GM12878 (cell line): ENCODE measurements at regions of chr4 and their contacts with region 1.

Region 1: GRCh38 chr4:2867758-2868491 is 24.3 kb downstream of the ADD1 start:
- DNase-seq: no peak
- ATAC-seq: no peak
- H3K4me3 ChIP-seq: no peak overlapping the region
- H3K27ac ChIP-seq: no peak overlapping the region
- H3K4me1 ChIP-seq: peaks cover under 1% of the 10 kb centered on the region; the same call in 1 of the 2 replicates
- H3K27me3 ChIP-seq: no peaks in the 10 kb centered on the region
- CTCF ChIP-seq: no peak
- EP300 ChIP-seq: no peak
- POLR2A ChIP-seq: no peak
- RAD21 ChIP-seq: no peak

Region 2: DNA sequence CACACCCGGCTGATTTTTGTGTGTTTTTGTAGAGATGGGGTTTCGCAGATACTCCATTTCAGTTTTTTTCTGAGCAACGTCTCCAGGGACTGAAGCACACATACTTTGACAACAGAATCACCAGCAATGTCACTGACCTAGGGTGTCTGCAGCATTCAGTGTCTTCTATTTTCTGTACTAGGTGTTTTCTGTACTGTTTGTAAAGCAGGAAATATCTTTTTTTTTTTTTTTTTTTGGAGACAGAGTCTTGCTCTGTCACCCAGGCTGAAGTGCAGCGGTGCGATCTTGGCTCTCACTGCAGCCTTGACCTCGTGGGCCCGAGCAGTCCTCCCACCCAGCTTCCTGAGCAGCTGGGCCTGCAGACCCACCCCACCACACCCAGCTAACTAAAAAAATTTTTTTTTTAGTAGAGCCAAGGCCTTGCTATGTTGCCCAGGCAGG is 15.4 kb before region 1 on chr4:
- CTCF ChIA-PET with region 1: interaction called, 23 read pairs
- POLR2A ChIA-PET with region 1: interaction called, 7 read pairs
- RAD21 ChIA-PET with region 1: interaction called, 22 read pairs
- SMC1A ChIA-PET with region 1: interaction called, 49 read pairs
- in situ Hi-C with region 1: no loop called
- intact Hi-C with region 1: no loop called
- DNase-seq: peak; percentile 59
- ATAC-seq: peak; percentile 67
- H3K4me3 ChIP-seq: peak overlapping the region; percentile 65
- H3K27ac ChIP-seq: peak overlapping the region; percentile 60
- H3K4me1 ChIP-seq: peaks cover 50% of the 10 kb centered on the region
- H3K27me3 ChIP-seq: no peaks in the 10 kb centered on the region
- CTCF ChIP-seq: no peak
- EP300 ChIP-seq: no peak
- POLR2A ChIP-seq: no peak
- RAD21 ChIP-seq: no peak

Region 3: GRCh38 chr4:2910409-2910808 is 42.5 kb after region 1 on chr4:
- CTCF ChIA-PET with region 1: no interaction called
- POLR2A ChIA-PET with region 1: no interaction called
- RAD21 ChIA-PET with region 1: no interaction called
- SMC1A ChIA-PET with region 1: no interaction called
- in situ Hi-C with region 1: no loop called
- intact Hi-C with region 1: no loop called
- DNase-seq: no peak
- ATAC-seq: peak; percentile 72
- H3K4me3 ChIP-seq: no peak overlapping the region
- H3K27ac ChIP-seq: no peak overlapping the region
- H3K4me1 ChIP-seq: peaks cover 7% of the 10 kb centered on the region
- H3K27me3 ChIP-seq: no peaks in the 10 kb centered on the region
- CTCF ChIP-seq: peak in 2 of 3 experiments; percentile 31 to 36; a peak in 3 of 6 replicates
- EP300 ChIP-seq: no peak
- POLR2A ChIP-seq: no peak
- RAD21 ChIP-seq: no peak

Region 4: GRCh38 chr4:3031357-3032082 is 163.6 kb after region 1 on chr4:
- CTCF ChIA-PET with region 1: no interaction called
- POLR2A ChIA-PET with region 1: no interaction called
- RAD21 ChIA-PET with region 1: no interaction called
- SMC1A ChIA-PET with region 1: no interaction called
- in situ Hi-C with region 1: no loop called
- intact Hi-C with region 1: no loop called
- DNase-seq: no peak
- ATAC-seq: no peak
- H3K4me3 ChIP-seq: no peak overlapping the region
- H3K27ac ChIP-seq: no peak overlapping the region
- H3K4me1 ChIP-seq: no peaks in the 10 kb centered on the region; the same call in 1 of the 2 replicates
- H3K27me3 ChIP-seq: peaks cover 0 to 3% of the 10 kb centered on the region in 2 experiments; a peak in 1 of 4 replicates
- CTCF ChIP-seq: no peak
- EP300 ChIP-seq: no peak
- POLR2A ChIP-seq: no peak
- RAD21 ChIP-seq: no peak